ENCODE measurements at regions of chr2 and their contacts with region 1.

Region 1: DNA sequence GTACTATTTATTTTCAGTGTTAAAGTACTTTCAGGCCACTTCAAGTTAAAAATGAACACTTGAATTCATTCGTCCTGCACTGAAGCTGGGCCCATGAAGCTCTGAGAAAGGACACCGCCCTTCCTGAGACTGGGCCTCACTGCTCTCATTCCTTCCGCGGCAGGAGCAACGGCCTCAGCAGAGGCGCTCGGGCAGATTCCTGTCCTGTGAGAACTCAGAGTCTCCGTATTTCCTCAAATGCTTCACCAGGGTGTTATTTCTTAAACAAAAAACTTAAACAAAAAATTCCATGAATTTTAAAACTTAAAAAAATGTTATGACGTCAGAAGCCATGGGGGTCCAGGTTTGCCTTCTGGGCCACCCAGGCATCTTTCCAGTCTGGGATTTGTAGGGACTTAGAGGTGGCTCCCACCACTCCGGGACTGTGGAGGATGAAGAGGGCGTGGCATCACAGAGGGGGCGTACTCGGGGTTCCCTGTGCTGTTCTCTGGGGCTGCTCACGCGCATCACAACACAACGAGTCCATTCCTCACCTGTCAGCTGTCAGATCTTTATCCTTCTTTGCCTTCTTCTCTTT is 115.9 kb upstream of the ASB18 start:
- DNase-seq: no peak
- H3K4me3 ChIP-seq: no peak overlapping the region
- H3K27ac ChIP-seq: no peak overlapping the region
- H3K4me1 ChIP-seq: no peaks in the 10 kb centered on the region
- H3K27me3 ChIP-seq: peaks cover 39% of the 10 kb centered on the region
- CTCF ChIP-seq: no peak

Region 2: DNA sequence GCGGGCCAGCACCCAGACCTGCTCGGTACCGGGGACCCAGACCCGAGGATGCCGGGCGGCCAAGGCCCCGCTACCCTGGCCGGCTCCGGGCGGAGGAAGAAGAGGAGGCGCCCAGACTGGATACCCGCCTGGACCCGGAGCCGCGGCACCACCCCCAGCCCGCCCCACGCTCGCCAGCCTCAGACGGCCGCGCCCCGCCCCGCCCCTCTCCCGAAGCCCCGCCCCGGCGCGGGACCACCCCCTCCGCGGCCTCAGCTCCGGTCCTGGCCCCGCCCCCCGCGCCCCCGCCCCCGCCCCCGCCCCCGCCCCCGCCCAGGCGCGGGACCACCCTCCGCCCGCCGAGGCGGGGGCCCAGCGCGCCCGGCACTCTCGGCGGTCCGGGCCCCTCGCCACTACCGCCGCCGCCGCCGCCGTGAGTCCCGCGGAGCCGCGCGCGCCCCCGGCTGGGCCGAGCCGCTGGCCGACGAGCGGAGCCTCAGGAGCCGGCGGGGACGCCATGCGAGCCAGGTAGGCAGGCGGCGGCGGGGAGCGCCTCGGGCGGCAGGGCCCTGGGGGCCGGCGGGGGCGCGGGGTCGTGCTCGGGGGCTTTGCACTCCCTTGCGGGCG is 1428.4 kb before region 1 on chr2 and contains the start of gene SH3BP4:
- CTCF ChIA-PET with region 1: no interaction called
- POLR2A ChIA-PET with region 1: no interaction called
- intact Hi-C with region 1: no loop called
- DNase-seq: peak; percentile 79
- H3K4me3 ChIP-seq: peak within 1 kb of the TSS; percentile 95
- H3K27ac ChIP-seq: peak within 1 kb of the TSS; percentile 76
- H3K4me1 ChIP-seq: peaks cover 36% of the 10 kb centered on the region
- H3K27me3 ChIP-seq: no peaks in the 10 kb centered on the region
- CTCF ChIP-seq: no peak
- total RNA-seq, gene SH3BP4: 19.5 and 19.9 TPM in 2 replicates

Region 3: DNA sequence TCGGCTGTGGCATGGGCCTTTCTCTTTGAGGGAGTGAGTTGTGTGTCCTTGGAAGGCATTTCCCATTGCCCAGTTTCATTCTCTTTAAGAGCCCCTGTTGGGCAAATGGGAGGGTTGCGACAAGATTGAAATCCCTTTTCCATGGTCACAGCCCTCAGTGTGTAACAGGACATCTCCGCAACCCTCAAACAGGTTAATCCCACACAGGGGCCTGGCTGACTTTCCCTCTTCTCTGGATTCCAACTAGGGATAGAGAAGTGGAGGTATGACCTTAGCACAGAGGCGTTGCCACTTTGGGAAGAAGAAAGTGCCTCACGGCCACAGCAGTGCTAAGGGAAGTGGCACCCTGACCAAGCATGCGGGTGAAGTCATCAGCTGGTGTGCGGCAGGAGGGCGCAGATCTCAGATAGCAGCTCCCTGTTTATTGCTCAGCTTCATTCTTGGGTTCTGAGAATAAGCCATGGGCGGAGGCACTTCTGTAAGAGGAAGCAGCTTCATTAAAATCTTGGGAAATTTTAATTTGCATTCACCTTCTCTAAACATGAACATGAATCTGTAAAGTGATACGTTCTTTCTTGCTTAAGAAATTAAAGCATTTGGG is 468.4 kb before region 1 on chr2:
- CTCF ChIA-PET with region 1: no interaction called
- POLR2A ChIA-PET with region 1: interaction called, 10 read pairs
- intact Hi-C with region 1: no loop called
- DNase-seq: no peak
- H3K4me3 ChIP-seq: no peak overlapping the region
- H3K27ac ChIP-seq: no peak overlapping the region
- H3K4me1 ChIP-seq: no peaks in the 10 kb centered on the region
- H3K27me3 ChIP-seq: no peaks in the 10 kb centered on the region
- CTCF ChIP-seq: no peak